ENCODE measurements at regions of chr10 and their contacts with region 1.

Region 1: DNA sequence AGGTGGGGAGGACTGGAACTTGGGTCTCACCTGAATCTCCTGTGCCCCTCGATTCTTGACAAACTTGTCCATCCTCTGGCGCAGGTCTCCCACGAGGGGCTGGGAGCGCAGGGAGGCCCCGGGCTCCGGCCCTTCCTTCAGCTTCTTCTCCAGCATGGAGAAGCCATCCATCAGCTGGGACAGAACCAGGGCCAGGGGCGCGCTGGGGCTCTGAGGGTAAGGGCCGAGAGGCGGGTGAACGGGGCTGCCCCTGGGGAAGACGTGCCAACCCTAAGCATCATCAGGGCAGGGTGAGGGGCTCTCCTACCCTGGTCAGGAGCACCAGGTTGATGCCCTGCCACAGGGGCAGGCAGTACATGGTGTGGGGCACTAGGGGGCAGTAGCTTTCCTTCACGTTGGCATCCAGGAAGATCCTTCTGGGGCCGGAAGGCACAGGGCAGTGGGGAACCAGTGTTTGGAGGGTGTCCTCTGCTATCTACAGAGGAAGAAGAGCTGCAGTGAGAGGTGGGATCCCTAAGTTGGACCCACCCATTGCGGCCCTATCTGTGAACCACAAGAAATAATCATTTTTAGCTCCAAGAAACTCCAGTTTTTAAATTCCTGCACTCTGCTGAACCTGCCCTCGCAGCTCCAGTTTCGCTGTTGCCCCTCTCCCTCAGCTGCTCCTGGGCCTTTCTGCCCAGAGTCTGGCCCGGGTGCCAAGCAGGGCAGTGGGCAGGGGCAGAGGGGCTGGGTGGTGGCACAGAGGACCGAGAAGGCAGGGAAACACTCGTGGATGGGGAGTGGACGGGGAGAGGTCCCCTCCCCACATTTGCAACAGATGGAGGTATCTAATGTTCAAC is 10.8 kb upstream of the PYROXD2 start:
- DNase-seq: peak; percentile 83
- ATAC-seq: peak; percentile 88
- H3K4me3 Mint-ChIP-seq: no peak overlapping the region
- H3K27ac Mint-ChIP-seq: no peak overlapping the region
- H3K4me1 Mint-ChIP-seq: no peaks in the 10 kb centered on the region
- H3K27me3 Mint-ChIP-seq: no peaks in the 10 kb centered on the region
- CTCF ChIP-seq: peak; percentile 82

Region 2: GRCh38 chr10:98408799-98409198 is 16.9 kb before region 1 on chr10:
- CTCF ChIA-PET with region 1: interaction called, 23 read pairs
- POLR2A ChIA-PET with region 1: no interaction called
- DNase-seq: no peak
- ATAC-seq: no peak
- H3K4me3 Mint-ChIP-seq: no peak overlapping the region
- H3K27ac Mint-ChIP-seq: peak overlapping the region; percentile 33; the same call in 1 of the 2 replicates
- H3K4me1 Mint-ChIP-seq: peaks cover 3% of the 10 kb centered on the region
- H3K27me3 Mint-ChIP-seq: no peaks in the 10 kb centered on the region
- CTCF ChIP-seq: no peak

Region 3: DNA sequence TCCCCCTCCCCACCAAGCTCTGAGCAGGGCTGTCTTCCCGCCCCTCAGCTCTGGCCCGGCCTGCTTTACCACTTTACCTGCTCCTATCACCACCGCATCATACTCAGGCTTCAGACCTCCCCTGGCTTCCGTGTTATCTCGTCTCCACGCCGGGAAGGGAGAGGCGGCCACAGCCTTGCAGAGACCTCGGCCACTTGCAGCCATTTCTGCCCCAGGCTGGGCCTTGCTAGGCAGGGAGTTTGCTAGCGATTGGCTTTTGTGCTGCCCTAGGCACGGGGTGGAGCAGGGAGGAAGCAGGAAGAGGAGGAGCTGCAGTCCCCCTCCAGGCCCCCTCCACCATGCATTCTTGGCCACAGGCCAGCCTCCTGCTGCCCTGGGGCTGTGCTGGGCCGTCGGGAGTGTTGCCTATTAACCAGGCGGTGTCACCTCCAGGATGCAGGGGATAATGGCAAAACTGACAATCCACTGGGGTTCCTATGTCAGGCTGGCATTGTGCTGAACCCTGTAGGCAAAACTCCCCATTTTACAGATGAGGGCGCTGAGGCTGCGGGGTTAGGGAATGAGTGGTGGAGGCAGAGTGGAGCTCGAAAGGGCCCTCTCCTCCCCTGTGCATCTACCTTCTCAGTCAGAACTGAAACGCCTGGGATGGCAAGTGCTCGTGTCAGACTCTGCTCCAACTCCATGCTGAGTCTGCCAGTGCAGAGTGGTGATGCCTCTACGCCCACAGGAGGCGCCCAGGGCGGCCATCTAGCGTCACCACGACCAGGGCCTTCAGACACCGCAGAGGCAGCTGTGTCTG is 10.6 kb before region 1 on chr10 and contains the start of gene PYROXD2:
- CTCF ChIA-PET with region 1: interaction called, 23 read pairs
- POLR2A ChIA-PET with region 1: interaction called, 3 read pairs
- DNase-seq: peak; percentile 78
- ATAC-seq: peak; percentile 95
- H3K4me3 Mint-ChIP-seq: peak within 1 kb of the TSS; percentile 83
- H3K27ac Mint-ChIP-seq: peak within 1 kb of the TSS; percentile 92
- H3K4me1 Mint-ChIP-seq: peaks cover 15% of the 10 kb centered on the region
- H3K27me3 Mint-ChIP-seq: no peaks in the 10 kb centered on the region
- CTCF ChIP-seq: no peak
- total RNA-seq, gene PYROXD2: 7.0 to 8.6 TPM (median 8.1 TPM) in 3 replicates

Measured in WTC11 (cell line).